ENCODE measurements at regions of chr9 and their contacts with region 1.

Region 1: GRCh38 chr9:19174127-19174912 is 47.0 kb upstream of the PLIN2 start:
- DNase-seq: peak; percentile 71 to 94
- H3K4me3 ChIP-seq: no peak overlapping the region
- CTCF ChIP-seq: peak in 1 of 3 donors; percentile 66
- POLR2A ChIP-seq: no peak

Region 2: DNA sequence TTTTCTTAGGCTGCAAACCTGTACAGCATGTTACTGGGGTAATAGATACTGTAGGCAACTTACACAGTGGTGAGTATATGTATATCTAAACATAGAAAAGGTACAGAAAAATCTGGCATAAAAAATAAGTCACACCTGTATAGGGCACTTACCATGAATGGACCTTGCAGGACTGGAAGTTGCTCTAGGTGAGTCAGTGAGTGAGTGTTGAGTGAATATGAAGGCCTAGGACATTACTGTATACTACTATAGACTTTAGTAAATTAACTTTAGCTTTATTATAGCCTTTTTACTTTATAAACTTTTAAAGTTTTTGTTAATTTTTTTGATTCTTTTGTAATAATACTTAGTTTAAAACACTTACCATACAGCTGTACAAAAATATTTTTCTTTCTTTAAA is 107.5 kb after region 1 on chr9:
- intact Hi-C with region 1: no loop called
- DNase-seq: no peak
- H3K4me3 ChIP-seq: no peak overlapping the region
- CTCF ChIP-seq: no peak
- POLR2A ChIP-seq: no peak

Region 3: GRCh38 chr9:19456996-19457692 is 282.8 kb after region 1 on chr9:
- intact Hi-C with region 1: loop called (anchors 10 kb)
- DNase-seq: peak; percentile 71 to 90
- H3K4me3 ChIP-seq: no peak overlapping the region
- CTCF ChIP-seq: peak in 1 of 3 donors; percentile 85
- POLR2A ChIP-seq: no peak

Region 4: GRCh38 chr9:20028849-20029231 is 854.5 kb after region 1 on chr9:
- intact Hi-C with region 1: no loop called
- DNase-seq: no peak
- H3K4me3 ChIP-seq: no peak overlapping the region
- CTCF ChIP-seq: no peak
- POLR2A ChIP-seq: no peak

Measured in lower leg skin (tissue), 4 donors.